AG04450 (cell line): ENCODE measurements at regions of chr21 and their contacts with region 1.

Region 1: DNA sequence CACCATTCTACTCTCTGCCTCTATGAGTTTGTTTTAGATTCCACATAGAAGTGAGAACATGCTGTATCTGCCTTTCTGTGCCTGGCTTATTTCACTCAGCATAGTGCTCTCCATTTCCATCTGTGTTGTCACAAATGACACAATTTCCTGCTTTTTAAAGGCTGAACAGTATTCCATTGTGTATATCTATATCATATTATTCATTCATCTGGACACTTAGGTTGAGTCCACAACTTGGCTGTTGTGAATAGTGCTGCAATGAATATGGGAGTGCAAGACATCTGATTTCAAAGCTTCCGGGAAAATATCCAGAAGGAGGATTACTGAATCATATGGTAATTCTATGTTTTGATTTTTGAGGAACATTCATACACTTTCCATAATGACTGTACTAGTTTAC is 20.1 kb upstream of the DONSON start:
- DNase-seq: no peak
- H3K4me3 ChIP-seq: no peak overlapping the region
- H3K27ac ChIP-seq: peak overlapping the region; percentile 39
- H3K27me3 ChIP-seq: no peaks in the 10 kb centered on the region
- CTCF ChIP-seq: no peak

Region 2: DNA sequence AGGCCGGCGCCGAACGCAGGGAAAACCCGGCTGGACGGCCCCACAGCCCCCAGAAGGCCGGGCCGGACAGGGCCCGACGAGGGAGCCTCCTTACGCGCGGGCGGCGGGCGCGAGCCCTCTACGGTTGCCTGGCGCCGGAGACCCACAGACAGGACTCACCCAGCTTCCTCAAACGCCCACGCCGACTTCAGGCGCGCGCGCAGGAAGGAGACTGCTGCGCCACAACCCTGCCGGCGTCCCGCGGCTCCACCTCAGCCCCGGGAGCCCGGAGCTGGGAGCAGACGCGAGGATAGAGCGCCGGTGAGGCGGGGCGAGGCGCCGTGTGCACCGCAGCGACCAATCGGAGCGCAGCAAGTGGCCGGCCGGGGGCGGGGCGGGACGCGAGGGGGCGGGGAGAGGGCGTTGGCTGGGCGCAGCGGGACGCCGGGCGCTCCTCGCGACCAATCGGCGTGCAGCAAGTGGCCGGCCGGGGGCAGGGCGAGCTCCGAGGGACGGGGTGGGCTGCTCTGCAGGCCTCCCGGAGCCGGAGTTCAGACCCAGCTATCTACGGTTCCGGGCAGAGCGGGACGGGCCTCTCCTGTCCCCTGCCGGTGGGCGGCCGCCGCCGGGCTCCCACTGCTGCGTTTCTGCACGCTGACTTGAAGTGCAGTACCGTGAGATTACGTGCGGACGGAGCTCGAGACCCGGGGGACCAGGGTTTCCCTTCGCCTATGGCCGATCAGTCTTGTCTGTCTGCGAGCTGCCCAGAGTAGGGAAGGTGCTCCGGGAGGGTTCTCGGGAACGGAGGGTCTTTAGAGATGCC is 128.7 kb before region 1 on chr21 and contains the start of gene TMEM50B:
- CTCF ChIA-PET with region 1: interaction called, 17 read pairs
- POLR2A ChIA-PET with region 1: no interaction called
- DNase-seq: peak; percentile 91
- H3K4me3 ChIP-seq: peak within 1 kb of the TSS; percentile 82
- H3K27ac ChIP-seq: peak within 1 kb of the TSS; percentile 85
- H3K27me3 ChIP-seq: no peaks in the 10 kb centered on the region
- CTCF ChIP-seq: peak; percentile 45; the same call in 1 of the 2 replicates
- polyA plus RNA-seq, gene TMEM50B: 24.4 and 33.8 TPM in 2 replicates

Region 3: DNA sequence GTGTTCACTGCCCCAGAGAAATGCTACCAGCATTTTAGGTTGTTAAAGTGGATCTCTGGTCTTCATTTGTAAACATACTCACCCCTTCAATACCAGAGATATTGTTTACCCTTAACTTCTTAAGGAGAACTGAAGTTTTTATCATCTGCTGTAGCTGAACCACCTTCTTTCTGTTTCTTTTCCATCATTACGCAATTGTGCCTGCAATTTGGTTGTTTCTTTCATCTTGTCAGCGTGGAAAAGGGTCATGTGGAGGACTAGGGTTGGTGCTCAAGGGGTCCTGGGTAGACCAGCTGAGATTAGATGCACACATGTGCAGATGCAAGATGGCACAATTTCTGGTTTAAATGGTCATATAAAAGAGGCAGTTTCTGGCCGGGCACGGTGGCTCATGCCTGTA is 89.7 kb before region 1 on chr21:
- CTCF ChIA-PET with region 1: interaction called, 14 read pairs
- POLR2A ChIA-PET with region 1: no interaction called
- DNase-seq: no peak
- H3K4me3 ChIP-seq: no peak overlapping the region
- H3K27ac ChIP-seq: no peak overlapping the region
- H3K27me3 ChIP-seq: no peaks in the 10 kb centered on the region
- CTCF ChIP-seq: no peak

Region 4: DNA sequence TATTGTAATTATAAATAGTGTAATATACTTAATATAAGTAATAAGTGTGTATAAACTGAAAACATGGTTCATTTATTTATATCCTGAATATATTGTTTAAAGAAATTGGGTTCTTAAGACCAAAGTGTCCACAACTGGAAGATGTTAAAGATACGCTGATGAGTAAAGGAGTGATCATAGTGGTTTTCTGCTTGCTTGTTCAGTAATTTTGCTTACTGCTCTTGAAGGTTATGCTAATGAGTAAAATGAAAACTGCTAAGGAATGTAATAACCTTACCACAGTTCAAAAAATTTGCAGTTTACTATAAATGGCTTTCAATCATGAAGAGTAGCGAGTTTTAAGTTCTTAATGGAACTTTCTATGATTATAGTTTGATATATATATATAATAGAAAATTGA is 42.0 kb before region 1 on chr21:
- CTCF ChIA-PET with region 1: interaction called, 28 read pairs
- POLR2A ChIA-PET with region 1: no interaction called
- DNase-seq: no peak
- H3K4me3 ChIP-seq: no peak overlapping the region
- H3K27ac ChIP-seq: no peak overlapping the region
- H3K27me3 ChIP-seq: no peaks in the 10 kb centered on the region
- CTCF ChIP-seq: no peak

Region 5: GRCh38 chr21:33588485-33589335 is 19.8 kb before region 1 on chr21 and contains the start of gene DONSON:
- CTCF ChIA-PET with region 1: interaction called, 47 read pairs
- POLR2A ChIA-PET with region 1: no interaction called
- DNase-seq: peak; percentile 27
- H3K4me3 ChIP-seq: peak within 1 kb of the TSS; percentile 88
- H3K27ac ChIP-seq: peak within 1 kb of the TSS; percentile 87
- H3K27me3 ChIP-seq: no peaks in the 10 kb centered on the region
- CTCF ChIP-seq: no peak
- polyA plus RNA-seq, gene DONSON: 15.2 and 20.7 TPM in 2 replicates

Region 6: GRCh38 chr21:33619726-33620125 is 11.2 kb after region 1 on chr21:
- CTCF ChIA-PET with region 1: interaction called, 51 read pairs
- POLR2A ChIA-PET with region 1: no interaction called
- DNase-seq: no peak
- H3K4me3 ChIP-seq: no peak overlapping the region
- H3K27ac ChIP-seq: no peak overlapping the region
- H3K27me3 ChIP-seq: no peaks in the 10 kb centered on the region
- CTCF ChIP-seq: no peak

Region 7: GRCh38 chr21:33810766-33811165 is 202.2 kb after region 1 on chr21:
- CTCF ChIA-PET with region 1: no interaction called
- POLR2A ChIA-PET with region 1: no interaction called
- DNase-seq: no peak
- H3K4me3 ChIP-seq: no peak overlapping the region
- H3K27ac ChIP-seq: no peak overlapping the region
- H3K27me3 ChIP-seq: no peaks in the 10 kb centered on the region
- CTCF ChIP-seq: no peak